ENCODE measurements at regions of chr11 and their contacts with region 1.

Region 1: DNA sequence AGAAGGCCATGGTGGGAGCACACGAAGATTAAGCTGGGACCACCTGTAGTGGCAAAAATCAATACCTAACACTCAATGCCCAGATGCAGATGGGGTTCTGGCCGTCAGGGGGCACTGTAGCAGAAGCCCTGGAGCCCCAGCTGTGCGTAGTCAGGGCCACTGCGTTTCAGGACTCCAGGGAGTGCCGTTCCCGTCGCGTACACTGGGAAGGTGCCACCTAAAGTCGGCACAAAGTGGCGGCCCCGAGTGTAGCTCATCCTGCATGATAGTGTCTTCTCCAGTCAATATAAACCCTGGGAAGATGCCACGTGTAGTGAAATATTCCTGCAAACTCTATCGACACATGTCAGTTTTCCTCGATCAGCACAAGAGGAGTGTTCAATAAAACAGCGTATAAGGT is 123.8 kb upstream of the NTM start:
- DNase-seq: no peak
- ATAC-seq: peak; percentile 50 to 57

Region 2: DNA sequence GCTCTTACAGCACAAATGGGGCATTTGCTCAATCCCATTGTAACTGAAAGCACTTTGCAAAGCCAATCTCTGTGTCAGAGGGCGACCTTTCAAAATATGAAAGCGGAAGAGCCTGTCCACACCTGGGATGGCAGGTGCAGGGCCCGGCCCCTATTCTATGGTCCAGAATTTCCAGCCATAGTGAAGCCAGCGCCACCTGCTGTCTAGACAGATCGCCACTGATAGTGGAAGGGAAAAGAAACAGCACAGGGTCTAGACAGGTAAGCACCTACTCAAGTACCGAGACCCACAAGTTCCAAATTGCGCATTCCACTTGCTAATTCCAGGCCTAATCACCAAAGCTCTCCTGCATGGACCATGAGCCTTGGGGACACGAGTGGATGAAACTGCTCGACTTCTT is 265.1 kb after region 1 on chr11:
- intact Hi-C with region 1: loop called in 1 of 2 experiments (anchors 2 kb)
- DNase-seq: no peak
- ATAC-seq: peak in 1 of 2 donors; percentile 43

Region 3: GRCh38 chr11:131668500-131669400 is 422.1 kb after region 1 on chr11:
- intact Hi-C with region 1: loop called in 1 of 2 experiments (anchors 10 kb)
- DNase-seq: peak; percentile 49
- ATAC-seq: no peak